Endothelial cell of umbilical vein (primary cell): ENCODE measurements at regions of chr21 and their contacts with region 1.

Region 1: DNA sequence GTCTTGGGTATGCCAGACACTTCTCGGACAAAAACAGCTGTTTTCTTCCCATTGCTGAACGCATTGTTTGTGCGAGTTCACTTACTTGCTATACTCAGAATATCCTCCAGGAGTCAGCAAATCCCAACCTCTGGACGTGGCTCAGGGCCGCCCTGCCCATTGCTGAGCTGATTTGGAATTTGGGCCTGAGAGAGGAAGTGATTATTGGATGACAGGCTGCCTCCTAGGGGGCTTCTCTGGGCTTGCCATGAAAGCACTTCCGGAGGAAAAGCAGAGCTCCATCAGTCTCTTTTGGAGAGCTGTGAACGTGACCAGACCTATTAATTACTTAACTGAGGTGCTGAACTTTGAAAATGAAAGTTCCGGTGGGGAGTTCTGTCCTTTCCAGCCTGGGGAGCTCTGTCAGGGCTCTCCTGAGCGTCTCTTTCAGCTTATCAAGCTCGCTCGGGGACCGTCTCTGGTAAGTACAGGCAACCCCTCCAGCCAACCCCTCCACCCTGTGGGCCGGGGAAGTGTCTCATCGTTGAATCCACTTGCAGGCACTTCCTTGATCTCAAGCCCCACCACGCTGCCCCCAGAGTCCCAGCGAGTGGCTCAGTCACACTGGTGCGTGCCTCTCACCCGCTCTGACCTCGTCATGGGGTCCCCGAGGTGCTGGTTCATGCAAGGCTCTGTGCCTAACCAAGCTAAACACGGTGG is 76.9 kb downstream of the CLIC6 start:
- DNase-seq: peak; percentile 74
- H3K4me3 ChIP-seq: no peak overlapping the region
- H3K27ac ChIP-seq: no peak overlapping the region
- H3K4me1 ChIP-seq: no peaks in the 10 kb centered on the region
- H3K27me3 ChIP-seq: peaks cover 11 to 23% of the 10 kb centered on the region in 2 experiments
- CTCF ChIP-seq: peak; percentile 80 to 90
- POLR2A ChIP-seq: no peak

Region 2: DNA sequence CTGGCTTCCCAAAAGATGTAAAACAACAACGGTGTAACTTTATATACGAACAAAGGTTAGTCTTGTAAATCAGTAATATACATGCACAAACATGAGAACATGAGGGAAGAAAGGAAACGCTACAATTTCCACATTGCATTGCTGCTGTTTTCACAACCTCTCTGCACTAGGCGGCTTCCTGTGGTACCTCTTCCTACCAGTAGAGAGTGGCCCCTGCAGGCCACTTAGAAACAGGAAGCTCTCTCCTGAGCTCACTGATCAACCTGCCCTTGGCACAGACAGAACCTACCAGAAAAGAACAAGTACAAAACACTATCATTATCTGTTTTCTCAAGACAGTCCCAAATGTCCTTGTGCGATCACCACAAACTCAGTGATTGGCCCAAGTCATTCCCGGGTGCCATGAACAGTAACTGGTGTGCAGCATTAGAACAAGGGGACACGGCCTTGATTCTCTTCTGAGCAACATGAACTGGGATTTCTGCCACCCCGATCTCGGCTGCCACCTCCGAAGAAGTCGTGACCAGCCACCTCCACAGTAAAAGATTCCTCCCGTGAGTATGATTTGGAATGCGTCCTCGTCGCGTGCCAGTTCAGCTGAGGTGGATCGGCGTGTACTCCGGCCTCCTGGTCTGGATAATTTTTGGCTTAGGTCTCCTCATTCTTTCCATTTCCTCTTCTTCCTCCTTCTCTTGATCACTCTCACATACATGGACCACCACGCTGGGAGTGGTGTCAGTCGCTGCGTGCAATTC is 228.0 kb before region 1 on chr21:
- CTCF ChIA-PET with region 1: no interaction called
- POLR2A ChIA-PET with region 1: no interaction called
- dilution Hi-C with region 1: no loop called
- intact Hi-C with region 1: no loop called
- DNase-seq: peak; percentile 22
- H3K4me3 ChIP-seq: no peak overlapping the region
- H3K27ac ChIP-seq: no peak overlapping the region
- H3K4me1 ChIP-seq: no peaks in the 10 kb centered on the region
- H3K27me3 ChIP-seq: no peaks in the 10 kb centered on the region
- CTCF ChIP-seq: peak; percentile 14
- POLR2A ChIP-seq: no peak

Region 3: GRCh38 chr21:34726627-34727337 is 18.9 kb before region 1 on chr21:
- CTCF ChIA-PET with region 1: interaction called, 14 read pairs
- POLR2A ChIA-PET with region 1: no interaction called
- dilution Hi-C with region 1: no loop called
- intact Hi-C with region 1: no loop called
- DNase-seq: no peak
- H3K4me3 ChIP-seq: no peak overlapping the region
- H3K27ac ChIP-seq: no peak overlapping the region
- H3K4me1 ChIP-seq: no peaks in the 10 kb centered on the region
- H3K27me3 ChIP-seq: peaks cover 6 to 20% of the 10 kb centered on the region in 2 experiments
- CTCF ChIP-seq: no peak
- POLR2A ChIP-seq: no peak

Region 4: DNA sequence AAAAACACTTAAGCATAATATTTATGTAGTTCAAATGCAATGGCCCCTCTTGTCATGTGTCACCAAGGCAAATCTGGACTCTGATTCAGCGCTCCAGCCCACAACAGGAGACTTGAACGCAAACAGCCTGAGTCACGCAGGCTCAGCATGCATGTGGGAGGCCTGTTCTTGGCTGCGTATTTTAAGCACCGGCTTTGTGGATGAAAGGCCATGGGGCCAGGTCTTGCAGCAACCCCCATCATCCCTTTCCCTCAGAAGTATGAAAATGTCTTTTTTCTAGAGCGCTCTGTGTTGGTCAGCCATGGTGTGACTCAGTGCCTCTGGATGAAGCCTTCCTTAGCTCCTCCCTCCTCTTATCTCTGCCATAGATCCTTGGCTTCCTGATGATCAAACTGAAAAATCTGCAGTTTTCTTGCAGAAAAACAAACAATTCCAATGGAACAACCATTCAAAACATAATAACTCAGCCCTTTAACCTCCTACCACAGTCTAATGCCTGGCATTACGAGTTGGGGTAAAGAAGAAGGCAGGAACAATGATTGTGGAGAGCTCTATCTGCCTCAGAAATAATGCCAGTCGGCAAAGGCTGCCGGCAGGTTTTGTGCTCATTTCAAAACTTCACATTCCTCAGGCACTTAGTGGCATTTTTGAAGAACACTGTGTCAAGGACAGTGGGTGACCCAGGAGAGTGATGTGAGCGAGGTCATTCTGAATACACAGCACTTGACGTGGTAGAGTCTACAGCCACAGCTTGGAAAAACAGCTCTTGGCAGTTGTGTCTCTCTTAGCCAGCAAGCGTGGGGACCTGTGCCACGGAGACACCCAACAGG is 90.6 kb after region 1 on chr21:
- CTCF ChIA-PET with region 1: interaction called, 26 read pairs
- POLR2A ChIA-PET with region 1: no interaction called
- dilution Hi-C with region 1: no loop called
- intact Hi-C with region 1: no loop called
- DNase-seq: peak; percentile 98
- H3K4me3 ChIP-seq: peak overlapping the region in 1 of 3 experiments; percentile 3
- H3K27ac ChIP-seq: peak overlapping the region; percentile 78
- H3K4me1 ChIP-seq: peaks cover 30% of the 10 kb centered on the region
- H3K27me3 ChIP-seq: no peaks in the 10 kb centered on the region
- CTCF ChIP-seq: no peak
- POLR2A ChIP-seq: peak; percentile 26

Region 5: DNA sequence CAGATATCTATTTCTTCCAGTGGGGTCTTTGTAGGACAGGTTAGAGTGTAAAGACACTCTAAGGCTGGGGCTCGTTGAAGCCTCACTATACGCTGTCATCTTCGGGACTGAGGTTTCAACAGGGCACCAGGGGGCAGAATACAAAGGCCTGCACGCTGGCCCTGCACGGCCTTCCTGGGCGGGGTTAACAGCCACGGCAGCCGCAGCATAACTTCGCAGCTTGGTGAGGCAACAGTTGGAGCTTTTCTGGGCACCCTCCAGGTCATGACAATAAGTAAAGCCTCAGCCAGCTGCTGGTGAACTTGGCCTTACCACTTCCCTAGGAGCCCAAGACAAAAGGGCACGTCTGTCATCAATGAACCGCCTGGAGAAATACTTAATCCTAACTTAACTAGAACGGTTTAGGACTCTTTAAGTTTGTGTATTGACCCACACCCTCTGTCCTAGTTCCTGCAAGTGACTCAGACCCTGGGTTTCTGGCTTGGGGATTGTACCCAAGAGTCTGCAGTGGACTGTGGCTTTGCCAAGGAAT is 305.6 kb after region 1 on chr21:
- CTCF ChIA-PET with region 1: interaction called, 21 read pairs
- POLR2A ChIA-PET with region 1: no interaction called
- dilution Hi-C with region 1: no loop called
- intact Hi-C with region 1: loop called (anchors 1 kb)
- DNase-seq: peak; percentile 72
- H3K4me3 ChIP-seq: no peak overlapping the region
- H3K27ac ChIP-seq: no peak overlapping the region
- H3K4me1 ChIP-seq: peaks cover 43% of the 10 kb centered on the region
- H3K27me3 ChIP-seq: no peaks in the 10 kb centered on the region
- CTCF ChIP-seq: peak; percentile 71 to 74
- POLR2A ChIP-seq: no peak

Region 6: DNA sequence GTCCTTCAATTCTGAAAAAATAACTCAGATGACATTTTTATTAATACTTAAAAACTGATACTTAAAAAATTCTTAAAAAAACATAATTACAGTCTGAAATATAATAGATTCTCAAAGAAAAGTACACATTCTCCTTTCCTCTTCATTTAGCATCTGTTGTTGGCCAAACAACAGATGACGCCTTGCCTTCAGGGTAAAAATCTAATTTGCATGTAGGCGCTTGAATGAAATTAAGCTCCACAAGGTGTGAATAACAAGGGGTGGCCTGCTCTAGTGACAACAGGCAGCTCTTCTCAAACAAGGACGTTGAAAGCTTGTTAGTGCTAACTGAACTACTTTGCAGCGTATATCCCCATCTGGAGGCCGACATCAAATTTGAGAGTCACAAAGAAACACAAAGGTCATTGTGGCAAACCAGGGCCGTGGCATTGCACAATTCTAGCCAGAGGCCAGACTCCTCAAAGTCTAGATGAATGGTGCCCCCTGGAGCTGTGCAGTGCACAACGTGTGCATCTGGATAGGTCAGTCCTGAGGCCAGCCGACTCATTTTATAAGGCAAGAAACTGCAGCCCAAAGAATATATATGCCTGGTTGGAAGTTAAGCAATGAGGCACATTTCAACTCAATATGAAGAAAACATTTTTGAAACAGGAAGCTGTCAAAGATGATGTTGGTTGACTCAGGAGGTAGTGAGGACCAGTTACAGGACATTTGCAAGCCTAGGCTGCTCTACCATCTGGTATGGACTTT is 762.6 kb after region 1 on chr21:
- CTCF ChIA-PET with region 1: interaction called, 3 read pairs
- POLR2A ChIA-PET with region 1: no interaction called
- dilution Hi-C with region 1: no loop called
- intact Hi-C with region 1: loop called (anchors 1 kb)
- DNase-seq: no peak
- H3K4me3 ChIP-seq: no peak overlapping the region
- H3K27ac ChIP-seq: no peak overlapping the region
- H3K4me1 ChIP-seq: peaks cover 2% of the 10 kb centered on the region
- H3K27me3 ChIP-seq: peaks cover 6 to 14% of the 10 kb centered on the region in 2 experiments
- CTCF ChIP-seq: no peak
- POLR2A ChIP-seq: no peak

Region 7: GRCh38 chr21:36028127-36029069 is 1282.7 kb after region 1 on chr21:
- CTCF ChIA-PET with region 1: interaction called, 18 read pairs
- POLR2A ChIA-PET with region 1: no interaction called
- dilution Hi-C with region 1: no loop called
- intact Hi-C with region 1: loop called (anchors 5 kb)
- DNase-seq: peak; percentile 73
- H3K4me3 ChIP-seq: no peak overlapping the region
- H3K27ac ChIP-seq: no peak overlapping the region
- H3K4me1 ChIP-seq: no peaks in the 10 kb centered on the region
- H3K27me3 ChIP-seq: peaks cover 0 to 2% of the 10 kb centered on the region in 2 experiments
- CTCF ChIP-seq: peak; percentile 90 to 92
- POLR2A ChIP-seq: no peak